ENCODE measurements at regions of chr14 and their contacts with region 1.

Region 1: GRCh38 chr14:93033983-93034670 is 81.6 kb downstream of the ITPK1 start:
- DNase-seq: peak; percentile 31
- ATAC-seq: peak; percentile 82
- H3K4me3 Mint-ChIP-seq: peak overlapping the region; percentile 59
- H3K27ac Mint-ChIP-seq: peak overlapping the region; percentile 82
- H3K4me1 Mint-ChIP-seq: peaks cover 58% of the 10 kb centered on the region
- H3K27me3 Mint-ChIP-seq: no peaks in the 10 kb centered on the region
- CTCF ChIP-seq: no peak

Region 2: GRCh38 chr14:93064411-93065323 is 30.5 kb after region 1 on chr14:
- CTCF ChIA-PET with region 1: interaction called, 4 read pairs
- POLR2A ChIA-PET with region 1: interaction called, 3 read pairs
- intact Hi-C with region 1: loop called (anchors 2 kb)
- DNase-seq: no peak
- ATAC-seq: no peak
- H3K4me3 Mint-ChIP-seq: no peak overlapping the region
- H3K27ac Mint-ChIP-seq: peak overlapping the region; percentile 61
- H3K4me1 Mint-ChIP-seq: peaks cover 69% of the 10 kb centered on the region
- H3K27me3 Mint-ChIP-seq: no peaks in the 10 kb centered on the region
- CTCF ChIP-seq: no peak

Region 3: DNA sequence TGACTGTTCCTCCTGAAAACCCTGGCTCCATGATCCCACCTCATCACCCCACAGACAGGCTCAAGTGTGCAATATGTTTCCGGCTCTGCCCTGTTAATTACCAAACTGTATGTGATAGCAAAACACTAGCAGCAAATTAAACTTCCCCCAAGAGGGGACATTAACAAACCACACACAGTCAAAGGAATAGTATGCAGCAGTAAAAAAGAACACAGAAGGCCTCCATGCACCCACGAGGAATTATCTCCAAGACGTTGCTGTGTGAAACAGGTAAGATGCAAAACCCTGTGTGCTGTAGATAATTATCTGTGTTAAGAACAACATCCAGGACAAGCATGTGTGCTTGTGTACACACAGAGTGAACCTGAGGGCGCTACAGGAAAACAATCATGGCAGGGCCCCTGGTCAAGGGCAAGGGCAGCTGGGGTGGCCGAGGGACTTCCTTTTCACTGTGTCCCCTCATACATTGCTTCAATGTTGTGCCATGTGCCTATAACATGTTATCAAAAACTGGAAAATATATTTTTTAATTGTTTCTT is 45.8 kb after region 1 on chr14:
- CTCF ChIA-PET with region 1: no interaction called
- POLR2A ChIA-PET with region 1: interaction called, 11 read pairs
- intact Hi-C with region 1: no loop called
- DNase-seq: no peak
- ATAC-seq: no peak
- H3K4me3 Mint-ChIP-seq: no peak overlapping the region
- H3K27ac Mint-ChIP-seq: no peak overlapping the region
- H3K4me1 Mint-ChIP-seq: peaks cover 56% of the 10 kb centered on the region
- H3K27me3 Mint-ChIP-seq: no peaks in the 10 kb centered on the region
- CTCF ChIP-seq: no peak

Region 4: GRCh38 chr14:93132470-93133065 is 98.4 kb after region 1 on chr14:
- CTCF ChIA-PET with region 1: interaction called, 10 read pairs
- POLR2A ChIA-PET with region 1: no interaction called
- intact Hi-C with region 1: no loop called
- DNase-seq: no peak
- ATAC-seq: peak; percentile 52
- H3K4me3 Mint-ChIP-seq: no peak overlapping the region
- H3K27ac Mint-ChIP-seq: no peak overlapping the region
- H3K4me1 Mint-ChIP-seq: no peaks in the 10 kb centered on the region
- H3K27me3 Mint-ChIP-seq: no peaks in the 10 kb centered on the region
- CTCF ChIP-seq: no peak

Region 5: GRCh38 chr14:93137864-93138263 is 103.7 kb after region 1 on chr14:
- CTCF ChIA-PET with region 1: interaction called, 10 read pairs
- POLR2A ChIA-PET with region 1: no interaction called
- intact Hi-C with region 1: loop called (anchors 1 kb)
- DNase-seq: no peak
- ATAC-seq: no peak
- H3K4me3 Mint-ChIP-seq: no peak overlapping the region
- H3K27ac Mint-ChIP-seq: no peak overlapping the region
- H3K4me1 Mint-ChIP-seq: peaks cover 3% of the 10 kb centered on the region
- H3K27me3 Mint-ChIP-seq: no peaks in the 10 kb centered on the region
- CTCF ChIP-seq: no peak

Region 6: DNA sequence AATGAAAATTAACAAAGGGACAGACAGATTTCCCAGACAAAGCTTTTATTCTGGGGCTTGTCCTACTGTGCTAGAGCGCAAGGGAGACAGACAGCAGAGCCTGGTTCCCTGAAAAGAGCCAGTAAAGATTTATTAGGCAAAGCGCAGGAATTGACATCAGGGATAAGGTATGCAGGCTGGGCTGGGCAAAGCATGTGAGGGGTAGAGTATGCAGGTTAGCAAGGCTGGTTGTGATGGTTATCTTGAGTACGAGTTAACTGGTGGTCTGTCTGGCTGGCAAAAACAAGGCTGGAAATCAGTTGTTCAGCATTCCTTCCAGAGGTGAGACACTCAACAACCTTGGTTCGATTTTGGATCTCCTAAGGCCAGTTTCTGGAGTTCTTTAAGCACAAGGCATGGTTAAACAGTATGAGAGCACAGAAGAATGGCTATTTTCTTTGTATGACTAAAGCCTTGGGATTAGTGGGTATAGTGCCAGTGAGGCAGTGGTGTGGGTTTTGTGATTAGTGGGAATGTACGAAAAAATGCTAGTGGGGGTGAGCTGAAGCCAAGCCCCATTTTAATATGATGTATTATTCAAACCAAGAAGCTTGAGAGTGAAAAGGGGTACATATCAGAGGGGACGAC is 267.8 kb after region 1 on chr14:
- CTCF ChIA-PET with region 1: no interaction called
- POLR2A ChIA-PET with region 1: no interaction called
- intact Hi-C with region 1: no loop called
- DNase-seq: no peak
- ATAC-seq: no peak
- H3K4me3 Mint-ChIP-seq: no peak overlapping the region
- H3K27ac Mint-ChIP-seq: no peak overlapping the region
- H3K4me1 Mint-ChIP-seq: peaks cover 46% of the 10 kb centered on the region
- H3K27me3 Mint-ChIP-seq: no peaks in the 10 kb centered on the region
- CTCF ChIP-seq: no peak

Measured in activated B cell treated with CpG ODN at 0.5 μM for 24 hours (primary cell).